Heart left ventricle (tissue), 16 donors: ENCODE measurements at regions of chr13 and their contacts with region 1.

Region 1: GRCh38 chr13:77329133-77329910 is 2.4 kb upstream of the MYCBP2 start:
- DNase-seq: peak; percentile 83 to 89 (median 85)
- ATAC-seq: peak; percentile 79 to 89 (median 86)
- H3K4me3 ChIP-seq: peak overlapping the region; percentile 70 to 88 (median 79)
- H3K27ac ChIP-seq: peak overlapping the region; percentile 59 to 96 (median 86)
- H3K4me1 ChIP-seq: peaks cover 4 to 38% (median 25%) of the 10 kb centered on the region in 12 donors
- H3K27me3 ChIP-seq: no peaks in the 10 kb centered on the region
- CTCF ChIP-seq: no peak
- POLR2A ChIP-seq: no peak

Region 2: DNA sequence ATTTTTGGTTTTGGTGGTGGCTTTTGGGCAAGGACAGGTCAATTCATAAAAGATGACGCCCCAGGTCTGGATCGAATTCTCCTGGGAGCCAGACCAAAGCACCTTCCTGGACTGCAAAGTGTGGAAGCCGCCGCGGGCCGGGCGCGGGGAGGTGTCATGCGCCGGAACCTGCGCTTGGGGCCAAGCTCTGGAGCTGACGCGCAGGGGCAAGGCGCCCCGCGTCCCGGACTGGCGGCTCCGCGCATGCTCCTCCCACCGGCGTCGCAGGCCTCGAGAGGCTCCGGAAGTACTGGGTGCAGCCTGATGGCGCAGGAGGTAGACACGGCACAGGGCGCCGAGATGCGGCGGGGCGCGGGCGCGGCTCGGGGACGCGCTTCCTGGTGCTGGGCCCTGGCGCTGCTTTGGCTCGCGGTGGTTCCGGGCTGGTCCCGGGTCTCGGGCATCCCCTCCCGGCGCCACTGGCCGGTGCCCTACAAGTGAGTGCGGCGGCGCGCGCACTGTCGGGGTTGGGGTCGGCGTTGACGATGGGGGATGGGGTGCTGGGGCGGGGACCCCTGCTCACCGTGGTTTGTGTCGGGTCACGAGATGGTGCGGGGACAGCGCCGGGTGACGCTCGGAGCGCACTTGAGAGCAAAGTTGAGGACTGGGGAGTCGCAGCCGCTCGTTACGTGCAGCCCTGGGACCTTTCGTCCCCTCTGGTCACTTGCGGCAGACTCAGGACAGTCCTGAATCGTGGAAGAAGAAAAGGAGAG is 337.4 kb before region 1 on chr13 and contains the start of gene CLN5:
- intact Hi-C with region 1: no loop called
- DNase-seq: peak; percentile 93 to 97 (median 96)
- ATAC-seq: peak; percentile 97 to 99 (median 98)
- H3K4me3 ChIP-seq: peak within 1 kb of the TSS; percentile 60 to 94 (median 78)
- H3K27ac ChIP-seq: peak within 1 kb of the TSS; percentile 85 to 95 (median 90)
- H3K4me1 ChIP-seq: peaks cover 0 to 25% (median 11%) of the 10 kb centered on the region in 12 donors
- H3K27me3 ChIP-seq: no peaks in the 10 kb centered on the region
- CTCF ChIP-seq: no peak
- POLR2A ChIP-seq: peak in 1 of 2 donors; percentile 93
- total RNA-seq, gene CLN5: 12.3 to 19.1 (median 15.9) TPM

Region 3: GRCh38 chr13:77026818-77027585 is 302.3 kb before region 1 on chr13 and contains the start of gene FBXL3:
- intact Hi-C with region 1: loop called in 3 of 10 experiments (anchors 5 to 10 kb)
- DNase-seq: peak; percentile 88 to 93 (median 89)
- ATAC-seq: peak; percentile 84 to 91 (median 90)
- H3K4me3 ChIP-seq: peak within 1 kb of the TSS; percentile 83 to 100 (median 96)
- H3K27ac ChIP-seq: peak within 1 kb of the TSS; percentile 96 to 100 (median 100)
- H3K4me1 ChIP-seq: peaks cover 6 to 60% (median 42%) of the 10 kb centered on the region in 12 donors
- H3K27me3 ChIP-seq: no peaks in the 10 kb centered on the region
- CTCF ChIP-seq: no peak
- POLR2A ChIP-seq: peak in 1 of 2 donors; percentile 55
- total RNA-seq, gene FBXL3: 27.5 to 50.0 (median 32.1) TPM

Region 4: GRCh38 chr13:77480066-77480465 is 150.7 kb after region 1 on chr13:
- intact Hi-C with region 1: loop called in 3 of 10 experiments (anchors 5 to 10 kb)
- DNase-seq: no peak
- ATAC-seq: no peak
- H3K4me3 ChIP-seq: no peak overlapping the region
- H3K27ac ChIP-seq: no peak overlapping the region
- H3K4me1 ChIP-seq: peaks cover 0 to 6% (median 0%) of the 10 kb centered on the region in 12 donors
- H3K27me3 ChIP-seq: no peaks in the 10 kb centered on the region
- CTCF ChIP-seq: no peak
- POLR2A ChIP-seq: no peak